ENCODE measurements at regions of chr11 and their contacts with region 1.

Region 1: GRCh38 chr11:26761361-26761809 is 39.5 kb upstream of the SLC5A12 start:
- DNase-seq: no peak
- H3K4me3 ChIP-seq: no peak overlapping the region
- H3K27ac ChIP-seq: peak overlapping the region in 1 of 2 donors; percentile 5
- H3K4me1 ChIP-seq: peaks cover 0 to 13% of the 10 kb centered on the region in 2 donors
- H3K27me3 ChIP-seq: no peaks in the 10 kb centered on the region
- CTCF ChIP-seq: no peak

Region 2: GRCh38 chr11:26719289-26719973 is 42.0 kb before region 1 on chr11:
- intact Hi-C with region 1: no loop called
- DNase-seq: no peak
- H3K4me3 ChIP-seq: no peak overlapping the region
- H3K27ac ChIP-seq: no peak overlapping the region
- H3K4me1 ChIP-seq: no peaks in the 10 kb centered on the region
- H3K27me3 ChIP-seq: no peaks in the 10 kb centered on the region
- CTCF ChIP-seq: no peak

Region 3: GRCh38 chr11:26805001-26805400 is 43.6 kb after region 1 on chr11:
- intact Hi-C with region 1: no loop called
- DNase-seq: no peak
- H3K4me3 ChIP-seq: no peak overlapping the region
- H3K27ac ChIP-seq: no peak overlapping the region
- H3K4me1 ChIP-seq: no peaks in the 10 kb centered on the region
- H3K27me3 ChIP-seq: no peaks in the 10 kb centered on the region
- CTCF ChIP-seq: no peak

Region 4: GRCh38 chr11:26820739-26821138 is 59.4 kb after region 1 on chr11:
- intact Hi-C with region 1: loop called (anchors 2 kb)
- DNase-seq: peak in 1 of 2 donors; percentile 69
- H3K4me3 ChIP-seq: no peak overlapping the region
- H3K27ac ChIP-seq: peak overlapping the region; percentile 56 to 67
- H3K4me1 ChIP-seq: peaks cover 0 to 12% of the 10 kb centered on the region in 2 donors
- H3K27me3 ChIP-seq: no peaks in the 10 kb centered on the region
- CTCF ChIP-seq: no peak

Region 5: GRCh38 chr11:26841818-26842473 is 80.6 kb after region 1 on chr11:
- intact Hi-C with region 1: loop called (anchors 1 kb)
- DNase-seq: peak in 1 of 2 donors; percentile 70
- H3K4me3 ChIP-seq: no peak overlapping the region
- H3K27ac ChIP-seq: peak overlapping the region; percentile 94 to 96
- H3K4me1 ChIP-seq: peaks cover 13 to 64% of the 10 kb centered on the region in 2 donors
- H3K27me3 ChIP-seq: no peaks in the 10 kb centered on the region
- CTCF ChIP-seq: no peak

Region 6: GRCh38 chr11:26914968-26915367 is 153.6 kb after region 1 on chr11:
- intact Hi-C with region 1: no loop called
- DNase-seq: no peak
- H3K4me3 ChIP-seq: no peak overlapping the region
- H3K27ac ChIP-seq: no peak overlapping the region
- H3K4me1 ChIP-seq: peaks cover 0 to 7% of the 10 kb centered on the region in 2 donors
- H3K27me3 ChIP-seq: no peaks in the 10 kb centered on the region
- CTCF ChIP-seq: no peak